Naive thymus-derived CD4-positive, alpha-beta T cell (primary cell): ENCODE measurements at regions of chr6 and their contacts with region 1.

Region 1: DNA sequence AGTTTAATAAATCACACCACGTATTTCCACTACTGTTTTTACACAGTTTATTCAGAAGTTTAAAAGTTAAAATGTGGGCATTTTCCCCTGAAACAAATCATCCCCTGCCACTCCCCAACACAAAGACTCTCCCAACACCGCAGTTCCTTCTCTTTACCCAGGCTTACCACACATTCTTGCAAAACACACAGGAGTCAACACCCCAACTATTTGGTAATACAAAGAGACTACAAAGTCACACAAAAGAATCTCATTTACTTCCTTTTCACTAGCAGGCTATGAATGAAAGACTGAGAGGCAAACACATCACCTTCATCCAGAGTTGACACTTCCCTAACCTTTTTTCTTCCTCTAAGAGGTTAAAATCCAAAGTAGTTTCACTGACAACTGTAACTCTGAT is 51.1 kb downstream of the KCTD20 start:
- DNase-seq: no peak
- ATAC-seq: peak; percentile 65
- H3K4me3 ChIP-seq: no peak overlapping the region
- H3K4me3 Mint-ChIP-seq: peak overlapping the region in 4 of 10 donors; percentile 4 to 16 (median 10)
- H3K27ac ChIP-seq: peak overlapping the region; percentile 24
- H3K27ac Mint-ChIP-seq: peak overlapping the region; percentile 26 to 90 (median 73)
- H3K4me1 ChIP-seq: peaks cover 0 to 4% of the 10 kb centered on the region in 2 donors
- H3K4me1 Mint-ChIP-seq: peaks cover 16 to 50% (median 40%) of the 10 kb centered on the region in 7 donors
- H3K27me3 ChIP-seq: no peaks in the 10 kb centered on the region
- H3K27me3 Mint-ChIP-seq: no peaks in the 10 kb centered on the region

Region 2: GRCh38 chr6:35920793-35921732 is 572.8 kb before region 1 on chr6 and contains the start of gene SRPK1:
- CTCF ChIA-PET with region 1: no interaction called
- POLR2A ChIA-PET with region 1: no interaction called
- intact Hi-C with region 1: no loop called
- DNase-seq: peak; percentile 58 to 92 (median 73)
- ATAC-seq: peak; percentile 87
- H3K4me3 ChIP-seq: peak within 1 kb of the TSS; percentile 98
- H3K4me3 Mint-ChIP-seq: peak within 1 kb of the TSS; percentile 87 to 100 (median 94)
- H3K27ac ChIP-seq: peak within 1 kb of the TSS; percentile 76
- H3K27ac Mint-ChIP-seq: peak within 1 kb of the TSS; percentile 81 to 98 (median 94)
- H3K4me1 ChIP-seq: peaks cover 12 to 28% of the 10 kb centered on the region in 2 donors
- H3K4me1 Mint-ChIP-seq: peaks cover 18 to 49% (median 41%) of the 10 kb centered on the region in 7 donors
- H3K27me3 ChIP-seq: no peaks in the 10 kb centered on the region
- H3K27me3 Mint-ChIP-seq: no peaks in the 10 kb centered on the region
- total RNA-seq, gene SRPK1: 29.1 to 80.9 (median 42.1) TPM

Region 3: DNA sequence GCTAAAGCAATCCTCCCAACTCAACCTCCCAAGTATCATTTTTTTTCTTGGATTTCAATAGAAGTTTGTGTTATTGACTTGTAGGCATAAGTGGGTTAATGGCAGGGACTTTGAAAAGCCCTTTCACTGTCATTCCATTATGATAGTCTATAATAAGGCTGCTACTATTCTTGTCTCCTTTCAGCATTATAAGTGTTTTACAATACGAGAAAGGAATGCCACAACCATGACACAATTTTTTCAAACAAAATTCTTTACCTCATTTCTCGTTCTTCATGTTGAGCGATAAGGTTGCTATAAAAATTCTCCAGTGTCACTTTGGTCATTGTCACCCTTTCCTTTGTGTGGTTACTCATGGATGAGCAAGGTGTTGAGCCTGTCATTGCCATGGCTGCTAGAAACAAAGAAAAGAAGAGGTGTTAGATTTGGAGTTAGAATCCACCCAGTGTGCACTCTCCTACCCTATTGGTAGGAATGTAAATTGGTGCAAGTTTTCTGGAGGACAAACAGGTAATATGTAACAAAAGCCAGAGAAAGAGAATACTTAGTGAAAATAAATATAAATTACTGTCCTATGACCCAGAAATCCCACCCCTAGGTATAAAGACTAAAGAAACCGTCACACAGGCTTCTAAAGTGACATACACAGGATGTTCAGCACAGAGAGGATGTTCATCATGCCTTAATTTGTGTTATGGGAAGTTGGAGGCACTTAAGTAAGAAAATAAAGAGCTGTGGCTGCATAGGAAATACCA is 46.1 kb after region 1 on chr6:
- CTCF ChIA-PET with region 1: no interaction called
- POLR2A ChIA-PET with region 1: interaction called, 7 read pairs
- intact Hi-C with region 1: loop called in 1 of 2 experiments (anchors 5 kb)
- DNase-seq: peak in 7 of 9 donors; percentile 56 to 84 (median 73)
- ATAC-seq: peak; percentile 78
- H3K4me3 ChIP-seq: peak overlapping the region; percentile 0
- H3K4me3 Mint-ChIP-seq: peak overlapping the region; percentile 60 to 98 (median 80)
- H3K27ac ChIP-seq: peak overlapping the region; percentile 95
- H3K27ac Mint-ChIP-seq: peak overlapping the region; percentile 79 to 99 (median 93)
- H3K4me1 ChIP-seq: peaks cover 48 to 64% of the 10 kb centered on the region in 2 donors
- H3K4me1 Mint-ChIP-seq: peaks cover 32 to 87% (median 56%) of the 10 kb centered on the region in 7 donors
- H3K27me3 ChIP-seq: no peaks in the 10 kb centered on the region
- H3K27me3 Mint-ChIP-seq: no peaks in the 10 kb centered on the region